ENCODE measurements at regions of chr1 and their contacts with region 1.

Region 1: GRCh38 chr1:165768513-165769394 is at the start of gene TMCO1:
- DNase-seq: peak; percentile 97
- ATAC-seq: peak; percentile 98
- H3K4me3 ChIP-seq: peak within 1 kb of the TSS; percentile 84 to 88
- H3K27ac ChIP-seq: peak within 1 kb of the TSS; percentile 25 to 76
- H3K4me1 ChIP-seq: peaks cover 0 to 3% of the 10 kb centered on the region in 2 donors
- H3K27me3 ChIP-seq: no peaks in the 10 kb centered on the region
- total RNA-seq, gene TMCO1: 56.8 to 61.8 TPM

Region 2: GRCh38 chr1:165630629-165631341 is 138.0 kb before region 1 on chr1 and contains the start of gene MGST3:
- intact Hi-C with region 1: loop called in 1 of 2 experiments (anchors 10 kb)
- DNase-seq: peak; percentile 95 to 98
- ATAC-seq: peak; percentile 98
- H3K4me3 ChIP-seq: peak within 1 kb of the TSS; percentile 84 to 93
- H3K27ac ChIP-seq: peak within 1 kb of the TSS; percentile 33 to 92
- H3K4me1 ChIP-seq: no peaks in the 10 kb centered on the region
- H3K27me3 ChIP-seq: no peaks in the 10 kb centered on the region
- total RNA-seq, gene MGST3: 199 to 230 TPM

Region 3: DNA sequence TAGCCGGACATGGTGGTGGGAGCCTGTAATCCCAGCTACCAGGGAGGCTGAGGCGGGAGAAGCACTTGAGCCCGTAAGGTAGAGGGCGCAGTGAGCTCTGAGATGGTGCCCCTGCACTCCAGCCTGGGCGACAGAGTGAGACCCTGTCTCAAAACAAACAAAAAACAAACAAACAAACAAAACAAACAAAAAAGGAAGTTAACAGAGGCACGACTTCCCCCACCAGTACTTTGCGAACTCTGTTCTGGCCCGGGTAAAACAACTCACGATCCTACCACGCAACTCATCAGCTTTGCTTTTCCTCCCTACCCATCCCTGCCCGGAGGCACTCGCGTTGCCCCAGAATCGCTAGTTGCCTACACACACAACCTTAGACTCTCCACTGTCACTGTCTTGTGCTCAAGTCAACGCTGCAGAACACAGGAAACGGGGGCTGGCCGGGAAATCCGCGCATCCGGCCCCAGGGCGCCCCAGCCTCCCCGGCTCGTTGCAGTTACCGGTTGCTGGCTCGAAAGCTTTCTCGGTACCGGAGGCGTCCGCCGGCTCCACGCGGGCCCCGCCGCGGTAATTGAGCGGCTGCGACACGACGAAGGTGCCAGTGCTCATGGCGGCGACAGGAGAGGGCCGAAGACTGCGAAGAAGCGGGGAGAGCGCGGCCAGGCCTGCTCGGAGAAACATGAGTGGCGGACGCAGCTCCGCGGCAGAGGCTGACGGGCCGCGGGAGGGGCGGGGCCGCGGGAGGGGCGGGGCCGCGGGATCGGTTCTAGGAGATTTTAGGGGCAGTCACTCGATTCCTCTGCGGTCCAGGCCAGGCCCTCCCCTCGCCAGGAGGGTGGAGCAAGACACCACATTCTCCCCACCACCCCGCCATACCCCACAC is 70.6 kb before region 1 on chr1 and contains the start of gene ALDH9A1:
- intact Hi-C with region 1: loop called in 1 of 2 experiments (anchors 2 kb)
- DNase-seq: peak; percentile 94 to 96
- ATAC-seq: peak; percentile 96
- H3K4me3 ChIP-seq: peak within 1 kb of the TSS; percentile 72 to 91
- H3K27ac ChIP-seq: peak within 1 kb of the TSS; percentile 72 to 73
- H3K4me1 ChIP-seq: no peaks in the 10 kb centered on the region
- H3K27me3 ChIP-seq: no peaks in the 10 kb centered on the region
- total RNA-seq, gene ALDH9A1: 36.5 to 54.3 TPM

Region 4: DNA sequence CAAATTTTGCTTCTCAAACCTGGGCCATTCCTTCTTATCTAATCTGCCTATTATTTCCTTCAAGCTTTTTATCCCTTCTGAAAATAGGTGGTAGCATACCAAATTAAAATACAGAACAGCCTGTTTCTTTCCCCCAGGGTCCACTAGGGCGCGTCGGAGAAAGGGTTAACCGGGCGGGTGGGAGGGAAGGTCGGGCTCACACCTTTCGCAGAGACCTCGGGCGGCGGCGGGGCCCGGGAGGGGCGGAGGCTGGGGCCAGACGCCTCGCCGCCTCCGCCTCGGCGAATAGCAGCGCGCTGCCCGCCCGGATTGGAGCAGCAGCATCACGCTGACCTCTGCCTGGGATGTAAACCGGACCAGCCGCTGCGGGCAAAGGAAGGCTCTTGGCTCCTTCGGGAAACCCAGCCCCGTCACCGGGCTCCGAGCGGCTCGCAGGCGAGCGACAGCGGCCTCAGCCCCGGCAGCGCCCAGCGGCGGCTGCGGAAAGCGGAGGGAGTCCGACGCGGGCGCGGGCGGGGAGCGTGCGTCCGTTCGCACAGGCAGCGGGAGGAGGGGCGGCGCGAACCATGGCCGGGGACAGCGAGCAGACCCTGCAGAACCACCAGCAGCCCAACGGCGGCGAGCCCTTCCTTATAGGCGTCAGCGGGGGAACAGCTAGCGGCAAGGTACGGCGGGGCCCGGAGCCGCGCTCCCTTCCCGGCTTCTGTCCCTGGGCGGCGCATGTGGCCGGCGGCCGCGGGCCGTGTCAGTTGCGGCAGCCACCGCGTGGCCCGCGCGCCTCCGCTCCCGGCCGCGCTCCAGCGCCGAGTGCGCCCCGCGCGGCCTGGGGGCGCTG is 58.7 kb after region 1 on chr1 and contains the start of gene UCK2:
- intact Hi-C with region 1: loop called in 1 of 2 experiments (anchors 2 kb)
- DNase-seq: peak; percentile 84 to 94
- ATAC-seq: peak; percentile 90
- H3K4me3 ChIP-seq: peak within 1 kb of the TSS; percentile 69 to 75
- H3K27ac ChIP-seq: peak within 1 kb of the TSS; percentile 72 to 88
- H3K4me1 ChIP-seq: no peaks in the 10 kb centered on the region
- H3K27me3 ChIP-seq: no peaks in the 10 kb centered on the region
- total RNA-seq, gene UCK2: 27.2 to 31.1 TPM

Region 5: DNA sequence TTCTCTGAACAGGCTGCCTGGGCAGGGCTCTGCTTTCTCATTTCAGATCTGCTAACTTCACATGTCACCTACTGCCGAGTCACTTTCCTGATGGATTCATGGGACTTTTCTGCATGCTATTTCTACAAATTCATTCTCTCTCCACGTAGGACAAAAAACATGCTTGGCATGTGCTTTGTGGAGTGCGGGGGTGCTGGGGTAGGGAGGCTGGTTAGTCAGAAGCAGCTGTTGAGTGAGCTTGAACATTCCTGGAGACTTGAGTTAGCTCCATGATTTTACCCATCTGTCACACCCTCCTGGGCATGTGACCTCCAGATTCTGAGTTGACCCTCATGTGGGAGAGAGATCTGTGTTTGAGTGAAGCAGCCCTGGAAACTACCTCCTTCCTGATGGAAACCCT is 130.1 kb after region 1 on chr1:
- intact Hi-C with region 1: loop called in 1 of 2 experiments (anchors 1 kb)
- DNase-seq: peak; percentile 79 to 85
- ATAC-seq: peak; percentile 68
- H3K4me3 ChIP-seq: no peak overlapping the region
- H3K27ac ChIP-seq: peak overlapping the region; percentile 90 to 100
- H3K4me1 ChIP-seq: peaks cover 0 to 4% of the 10 kb centered on the region in 2 donors
- H3K27me3 ChIP-seq: no peaks in the 10 kb centered on the region

Region 6: GRCh38 chr1:165914136-165914798 is 145.5 kb after region 1 on chr1:
- intact Hi-C with region 1: loop called (anchors 5 kb)
- DNase-seq: no peak
- ATAC-seq: peak; percentile 78
- H3K4me3 ChIP-seq: no peak overlapping the region
- H3K27ac ChIP-seq: no peak overlapping the region
- H3K4me1 ChIP-seq: no peaks in the 10 kb centered on the region
- H3K27me3 ChIP-seq: no peaks in the 10 kb centered on the region

Region 7: DNA sequence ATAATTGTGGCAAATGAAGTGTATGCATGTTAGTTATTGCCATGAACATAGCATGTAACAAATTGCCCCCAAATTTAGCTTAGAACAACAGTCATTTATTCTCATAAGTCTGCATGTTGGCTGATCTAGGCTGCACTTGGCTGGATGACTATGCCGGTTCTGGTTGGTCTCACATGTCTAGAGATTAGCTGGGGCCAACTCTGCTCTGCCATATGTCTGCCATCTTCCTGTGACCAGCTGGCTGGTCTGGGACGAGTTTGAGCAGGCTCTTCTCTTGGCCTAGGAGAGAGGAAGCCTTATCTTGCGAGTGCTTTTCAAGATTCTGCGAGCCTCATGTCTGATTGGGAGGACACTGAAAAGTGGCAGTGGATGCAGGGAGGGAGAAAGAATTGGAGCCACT is 596.3 kb after region 1 on chr1:
- intact Hi-C with region 1: no loop called
- DNase-seq: no peak
- ATAC-seq: no peak
- H3K4me3 ChIP-seq: no peak overlapping the region
- H3K27ac ChIP-seq: no peak overlapping the region
- H3K4me1 ChIP-seq: no peaks in the 10 kb centered on the region
- H3K27me3 ChIP-seq: no peaks in the 10 kb centered on the region

Measured in aorta (tissue), 5 donors.